Mammary epithelial cell (primary cell): ENCODE measurements at regions of chr12 and their contacts with region 1.

Region 1: GRCh38 chr12:2034633-2035430 is 18.0 kb upstream of the CACNA1C start:
- DNase-seq: peak; percentile 68
- H3K4me3 ChIP-seq: peak overlapping the region; percentile 9 to 19 (median 16)
- H3K27ac ChIP-seq: no peak overlapping the region
- H3K4me1 ChIP-seq: peaks cover 8% of the 10 kb centered on the region
- H3K27me3 ChIP-seq: peaks cover 5% of the 10 kb centered on the region
- CTCF ChIP-seq: peak; percentile 69 to 85

Region 2: GRCh38 chr12:1650260-1650977 is 384.4 kb before region 1 on chr12:
- CTCF ChIA-PET with region 1: no interaction called
- dilution Hi-C with region 1: no loop called
- in situ Hi-C with region 1: no loop called
- intact Hi-C with region 1: loop called (anchors 10 kb)
- DNase-seq: no peak
- H3K4me3 ChIP-seq: no peak overlapping the region
- H3K27ac ChIP-seq: no peak overlapping the region
- H3K4me1 ChIP-seq: no peaks in the 10 kb centered on the region
- H3K27me3 ChIP-seq: no peaks in the 10 kb centered on the region
- CTCF ChIP-seq: no peak

Region 3: GRCh38 chr12:1804545-1805332 is 230.1 kb before region 1 on chr12:
- CTCF ChIA-PET with region 1: interaction called, 4 read pairs
- dilution Hi-C with region 1: no loop called
- in situ Hi-C with region 1: loop called in 1 of 2 experiments (anchors 10 kb)
- intact Hi-C with region 1: no loop called
- DNase-seq: peak; percentile 76
- H3K4me3 ChIP-seq: no peak overlapping the region
- H3K27ac ChIP-seq: no peak overlapping the region
- H3K4me1 ChIP-seq: no peaks in the 10 kb centered on the region
- H3K27me3 ChIP-seq: no peaks in the 10 kb centered on the region
- CTCF ChIP-seq: no peak

Region 4: DNA sequence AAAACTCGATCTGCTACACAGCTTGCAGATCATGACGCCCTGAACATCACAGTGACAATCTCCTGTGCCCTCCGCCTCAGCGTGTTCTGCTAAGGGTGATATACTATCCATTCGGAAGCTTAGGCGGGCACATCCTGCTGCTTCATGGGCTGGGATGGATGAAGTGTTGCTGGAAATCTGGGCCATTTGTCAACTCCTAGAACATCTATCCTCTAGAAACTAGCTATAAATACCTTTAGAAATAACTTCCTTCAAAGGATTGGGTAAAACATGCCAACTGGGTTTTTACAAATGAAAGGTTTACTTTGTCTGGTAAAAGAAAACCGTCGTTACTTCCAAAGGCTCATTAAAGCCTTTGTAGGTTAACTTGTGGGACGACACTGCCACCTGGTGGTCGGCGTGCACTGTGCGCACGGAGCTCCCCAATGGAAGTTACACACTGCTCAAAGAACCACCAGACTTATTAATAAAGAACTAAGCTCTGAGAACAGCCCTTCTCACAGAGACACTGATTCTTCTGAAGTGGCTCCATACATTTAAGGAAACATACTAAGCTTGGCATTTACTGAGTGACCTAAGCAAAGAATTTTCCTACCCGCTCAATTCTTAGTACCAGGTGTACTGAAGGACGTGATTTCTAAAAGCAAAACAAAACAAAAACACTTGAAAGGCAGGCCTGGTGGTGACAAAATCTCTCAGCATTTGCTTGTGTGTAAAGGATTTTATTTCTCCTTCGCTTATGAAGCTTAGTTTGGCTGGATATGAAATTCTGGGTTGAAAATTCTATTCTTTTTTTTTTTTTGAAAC is 94.8 kb before region 1 on chr12:
- CTCF ChIA-PET with region 1: no interaction called
- dilution Hi-C with region 1: no loop called
- in situ Hi-C with region 1: no loop called
- intact Hi-C with region 1: loop called (anchors 1 kb)
- DNase-seq: peak; percentile 57
- H3K4me3 ChIP-seq: no peak overlapping the region
- H3K27ac ChIP-seq: no peak overlapping the region
- H3K4me1 ChIP-seq: no peaks in the 10 kb centered on the region
- H3K27me3 ChIP-seq: no peaks in the 10 kb centered on the region
- CTCF ChIP-seq: peak; percentile 90 to 95

Region 5: GRCh38 chr12:2129076-2129475 is 94.2 kb after region 1 on chr12:
- CTCF ChIA-PET with region 1: no interaction called
- dilution Hi-C with region 1: loop called (anchors 5 kb)
- in situ Hi-C with region 1: no loop called
- intact Hi-C with region 1: no loop called
- DNase-seq: peak; percentile 95
- H3K4me3 ChIP-seq: no peak overlapping the region
- H3K27ac ChIP-seq: no peak overlapping the region
- H3K4me1 ChIP-seq: peaks cover 13% of the 10 kb centered on the region
- H3K27me3 ChIP-seq: no peaks in the 10 kb centered on the region
- CTCF ChIP-seq: no peak

Region 6: GRCh38 chr12:2752676-2753371 is 718.0 kb after region 1 on chr12:
- CTCF ChIA-PET with region 1: no interaction called
- dilution Hi-C with region 1: loop called (anchors 25 kb)
- in situ Hi-C with region 1: no loop called
- intact Hi-C with region 1: no loop called
- DNase-seq: peak; percentile 55
- H3K4me3 ChIP-seq: no peak overlapping the region
- H3K27ac ChIP-seq: no peak overlapping the region
- H3K4me1 ChIP-seq: no peaks in the 10 kb centered on the region
- H3K27me3 ChIP-seq: peaks cover 13% of the 10 kb centered on the region
- CTCF ChIP-seq: peak in 1 of 2 donors; percentile 7